Activated CD4-positive, alpha-beta memory T cell treated with anti-CD3 and anti-CD28 coated beads for 36 hours (primary cell): ENCODE measurements at regions of chr11 and their contacts with region 1.

Region 1: GRCh38 chr11:122697636-122698167 is 42.2 kb downstream of the UBASH3B start:
- DNase-seq: peak; percentile 65
- H3K4me3 Mint-ChIP-seq: peak overlapping the region; percentile 57
- H3K27ac Mint-ChIP-seq: peak overlapping the region; percentile 75
- H3K4me1 Mint-ChIP-seq: peaks cover 80% of the 10 kb centered on the region
- H3K27me3 Mint-ChIP-seq: no peaks in the 10 kb centered on the region

Region 2: DNA sequence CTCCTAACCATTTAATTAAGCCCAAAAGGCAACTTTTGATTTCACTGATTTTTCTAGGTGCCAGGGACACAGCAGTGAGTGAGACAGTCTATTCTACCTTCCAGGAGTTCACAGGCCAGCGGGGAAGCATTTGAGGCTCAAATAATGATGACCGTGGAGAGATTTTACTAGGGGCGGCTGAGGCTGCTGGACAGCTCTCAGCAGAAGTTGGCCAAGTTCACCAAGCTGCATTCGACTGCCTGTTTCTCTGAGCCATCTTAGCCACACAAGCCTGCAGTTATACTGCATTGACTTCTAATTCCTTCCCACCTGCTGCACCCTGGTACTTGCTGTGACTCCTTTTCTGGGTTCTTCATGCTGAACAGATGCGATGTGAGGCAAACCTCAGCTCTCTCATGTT is 1842.7 kb before region 1 on chr11:
- CTCF ChIA-PET with region 1: no interaction called
- POLR2A ChIA-PET with region 1: no interaction called
- intact Hi-C with region 1: no loop called
- DNase-seq: no peak
- H3K4me3 Mint-ChIP-seq: no peak overlapping the region
- H3K27ac Mint-ChIP-seq: no peak overlapping the region
- H3K4me1 Mint-ChIP-seq: no peaks in the 10 kb centered on the region
- H3K27me3 Mint-ChIP-seq: peaks cover 5% of the 10 kb centered on the region

Region 3: GRCh38 chr11:122707901-122708300 is 10.2 kb after region 1 on chr11:
- CTCF ChIA-PET with region 1: no interaction called
- POLR2A ChIA-PET with region 1: no interaction called
- intact Hi-C with region 1: no loop called
- DNase-seq: no peak
- H3K4me3 Mint-ChIP-seq: no peak overlapping the region
- H3K27ac Mint-ChIP-seq: no peak overlapping the region
- H3K4me1 Mint-ChIP-seq: peaks cover 26% of the 10 kb centered on the region
- H3K27me3 Mint-ChIP-seq: no peaks in the 10 kb centered on the region

Region 4: DNA sequence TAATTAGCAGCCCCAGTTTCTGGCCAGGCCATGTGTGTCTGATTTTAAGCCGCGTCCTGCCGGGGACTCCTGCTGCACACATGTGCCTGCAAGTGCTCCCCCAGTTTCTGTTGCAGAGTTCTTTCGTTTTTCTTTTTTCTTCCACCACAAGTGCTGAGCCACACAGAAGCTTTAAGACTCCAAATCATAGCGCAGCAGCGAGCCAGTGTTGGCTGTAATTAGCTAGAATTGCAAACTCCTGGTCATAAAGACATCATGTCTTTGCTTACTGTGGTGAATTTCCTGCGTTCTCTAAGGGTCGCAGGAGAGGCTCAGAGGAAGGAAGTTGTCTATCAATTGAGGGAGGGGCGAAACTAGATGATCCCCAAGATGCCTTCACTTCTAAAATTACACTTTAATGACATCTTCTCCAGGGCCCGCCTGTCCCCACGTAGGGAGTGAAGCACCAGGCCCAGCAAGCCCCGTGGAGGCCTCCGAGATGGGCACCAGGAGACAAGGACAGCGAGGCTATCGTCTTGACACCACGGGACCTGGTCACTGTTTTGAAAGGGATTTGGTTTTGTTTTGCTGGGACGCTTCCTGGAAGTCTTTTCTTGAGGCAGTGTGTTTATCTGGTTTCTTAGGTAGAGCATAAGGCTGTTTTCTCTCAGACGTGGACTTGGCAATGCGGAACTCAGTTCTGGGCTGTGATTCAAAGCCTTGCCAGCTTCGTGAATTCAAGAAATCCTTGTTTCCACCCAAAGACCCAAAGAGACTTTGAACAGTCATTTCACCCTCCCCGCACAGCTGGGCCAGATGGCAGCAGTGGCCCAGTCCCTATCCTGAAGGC is 29.6 kb after region 1 on chr11:
- CTCF ChIA-PET with region 1: interaction called, 6 read pairs
- POLR2A ChIA-PET with region 1: interaction called, 5 read pairs
- intact Hi-C with region 1: loop called (anchors 2 kb)
- DNase-seq: peak; percentile 76
- H3K4me3 Mint-ChIP-seq: peak overlapping the region; percentile 53
- H3K27ac Mint-ChIP-seq: peak overlapping the region; percentile 71
- H3K4me1 Mint-ChIP-seq: peaks cover 63% of the 10 kb centered on the region
- H3K27me3 Mint-ChIP-seq: no peaks in the 10 kb centered on the region

Region 5: DNA sequence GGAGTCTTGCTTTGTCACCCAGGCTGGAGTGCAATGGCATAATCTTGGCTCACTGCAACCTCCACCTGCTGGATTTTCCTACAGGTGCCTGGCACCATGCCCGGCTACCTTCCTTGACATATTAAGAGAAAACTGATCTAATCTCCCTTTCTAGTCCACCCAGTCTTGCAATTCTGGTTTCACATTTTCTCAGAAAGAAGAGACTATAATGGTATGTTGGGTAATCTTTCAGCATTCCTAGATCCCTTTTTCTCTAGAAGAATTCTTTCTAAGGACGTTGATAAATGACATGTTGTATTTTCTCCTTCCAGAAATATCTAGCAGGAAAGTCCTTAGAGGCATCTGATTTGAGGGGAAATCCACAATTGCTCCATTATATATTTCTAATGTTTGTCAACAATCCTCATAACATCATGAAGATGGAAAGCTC is 374.6 kb after region 1 on chr11:
- CTCF ChIA-PET with region 1: no interaction called
- POLR2A ChIA-PET with region 1: no interaction called
- intact Hi-C with region 1: no loop called
- DNase-seq: no peak
- H3K4me3 Mint-ChIP-seq: no peak overlapping the region
- H3K27ac Mint-ChIP-seq: no peak overlapping the region
- H3K4me1 Mint-ChIP-seq: peaks cover 53% of the 10 kb centered on the region
- H3K27me3 Mint-ChIP-seq: no peaks in the 10 kb centered on the region